HEK293T (cell line): ENCODE measurements at regions of chr16 and their contacts with region 1.

Region 1: DNA sequence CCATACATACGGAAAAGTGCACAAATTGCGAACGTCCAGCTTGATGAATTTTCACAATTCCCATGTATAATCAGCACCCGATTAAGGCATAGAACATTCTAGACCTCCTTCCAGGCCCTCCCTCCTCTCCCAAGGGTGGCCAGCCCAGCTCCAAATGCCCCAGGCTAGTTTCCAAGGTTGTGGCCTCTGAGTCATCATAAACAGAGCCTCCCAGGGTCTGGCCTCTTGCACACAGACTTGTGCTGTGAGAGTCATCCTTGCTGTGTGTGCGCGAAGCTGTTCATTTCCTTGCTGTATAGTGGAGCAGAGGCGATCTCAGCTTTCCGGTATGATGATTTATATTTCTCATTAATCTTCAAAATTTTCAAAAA is 20.5 kb upstream of the JPH3 start:
- DNase-seq: peak; percentile 57

Region 2: GRCh38 chr16:87571136-87571867 is 10.5 kb before region 1 on chr16:
- CTCF ChIA-PET with region 1: interaction called, 22 read pairs
- POLR2A ChIA-PET with region 1: interaction called, 3 read pairs
- DNase-seq: peak; percentile 69